Tibial artery (tissue), 4 donors: ENCODE measurements at regions of chr1 and their contacts with region 1.

Region 1: DNA sequence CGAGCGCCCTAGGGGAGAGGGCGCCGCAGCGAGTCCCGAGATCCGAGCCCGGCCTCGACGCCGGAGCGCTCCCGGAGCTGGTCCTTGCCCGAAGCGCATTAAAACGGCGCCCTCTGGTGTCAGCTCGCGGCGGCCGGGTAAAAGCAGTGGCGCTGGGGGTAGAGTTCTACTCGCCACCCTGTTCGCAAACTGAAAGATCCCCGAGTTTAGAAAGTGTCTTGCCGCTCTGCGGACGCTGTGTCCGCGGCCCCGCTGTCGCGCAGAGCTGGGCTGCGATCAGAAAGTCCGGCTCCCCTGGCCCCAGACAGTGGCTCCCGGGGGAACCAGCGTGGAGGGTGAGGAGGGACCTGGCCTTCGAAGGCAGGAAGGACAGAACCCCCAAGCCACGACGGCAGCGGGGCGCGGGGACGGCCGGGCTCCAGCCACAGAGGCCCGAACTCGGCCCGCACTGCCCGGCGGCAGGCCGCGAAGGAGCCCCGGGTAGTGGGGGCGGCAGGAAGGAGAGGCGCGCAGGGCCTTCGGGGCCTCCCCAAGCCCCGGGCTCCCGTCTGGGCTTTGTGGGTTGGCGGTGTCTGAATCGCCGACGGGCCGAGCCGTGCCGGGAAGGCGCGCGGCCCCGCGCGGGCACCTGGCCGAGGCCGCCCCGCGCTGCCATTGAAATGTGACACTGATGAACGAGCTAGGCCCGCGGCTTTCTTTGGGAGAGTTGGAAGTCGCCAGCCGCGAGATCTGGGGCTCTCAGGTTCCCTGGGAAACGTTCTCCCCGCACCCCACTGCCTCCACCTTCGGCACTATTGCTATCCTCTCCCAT is 39.1 kb upstream of the NFIA start:
- DNase-seq: peak; percentile 89 to 93
- H3K4me3 ChIP-seq: peak overlapping the region; percentile 55 to 59
- H3K27ac ChIP-seq: peak overlapping the region; percentile 79 to 81
- H3K4me1 ChIP-seq: peaks cover 0 to 11% (median 8%) of the 10 kb centered on the region in 4 donors
- H3K27me3 ChIP-seq: no peaks in the 10 kb centered on the region
- CTCF ChIP-seq: peak; percentile 90 to 94

Region 2: GRCh38 chr1:59971464-59971911 is 1071.7 kb before region 1 on chr1:
- intact Hi-C with region 1: loop called (anchors 5 kb)
- DNase-seq: peak; percentile 68 to 81
- H3K4me3 ChIP-seq: no peak overlapping the region
- H3K27ac ChIP-seq: no peak overlapping the region
- H3K4me1 ChIP-seq: peaks cover 0 to 7% (median 5%) of the 10 kb centered on the region in 4 donors
- H3K27me3 ChIP-seq: no peaks in the 10 kb centered on the region
- CTCF ChIP-seq: peak; percentile 91

Region 3: DNA sequence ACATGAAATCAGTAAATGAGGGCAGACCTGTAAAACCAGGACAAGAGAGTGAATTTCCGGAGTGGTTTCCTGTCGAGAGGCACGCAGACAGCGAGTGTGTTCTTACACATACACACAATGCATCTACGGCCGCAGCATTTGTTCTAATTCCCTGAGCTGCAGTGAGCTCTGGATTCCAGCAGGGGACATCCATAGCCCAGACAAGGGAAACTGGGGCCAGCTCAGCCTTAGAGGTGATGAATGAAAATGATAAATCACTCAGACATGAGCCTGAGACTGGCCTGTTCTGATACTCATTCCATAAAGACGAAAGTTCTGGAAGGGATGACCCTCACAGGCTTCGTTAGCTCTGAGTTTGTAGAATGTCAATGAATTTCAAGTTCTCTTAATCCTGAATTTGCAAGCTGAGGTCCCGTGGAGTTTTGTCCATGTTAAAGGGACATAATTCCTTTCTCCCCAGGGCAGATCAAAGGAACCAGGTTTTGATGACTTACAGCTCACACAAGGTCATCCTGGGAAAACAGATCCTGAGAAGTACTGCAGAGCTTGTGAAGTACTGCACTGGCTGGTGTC is 761.8 kb before region 1 on chr1:
- intact Hi-C with region 1: loop called (anchors 5 kb)
- DNase-seq: peak; percentile 64 to 74
- H3K4me3 ChIP-seq: no peak overlapping the region
- H3K27ac ChIP-seq: no peak overlapping the region
- H3K4me1 ChIP-seq: peaks cover 0 to 41% (median 14%) of the 10 kb centered on the region in 4 donors
- H3K27me3 ChIP-seq: no peaks in the 10 kb centered on the region
- CTCF ChIP-seq: peak; percentile 86 to 90

Region 4: DNA sequence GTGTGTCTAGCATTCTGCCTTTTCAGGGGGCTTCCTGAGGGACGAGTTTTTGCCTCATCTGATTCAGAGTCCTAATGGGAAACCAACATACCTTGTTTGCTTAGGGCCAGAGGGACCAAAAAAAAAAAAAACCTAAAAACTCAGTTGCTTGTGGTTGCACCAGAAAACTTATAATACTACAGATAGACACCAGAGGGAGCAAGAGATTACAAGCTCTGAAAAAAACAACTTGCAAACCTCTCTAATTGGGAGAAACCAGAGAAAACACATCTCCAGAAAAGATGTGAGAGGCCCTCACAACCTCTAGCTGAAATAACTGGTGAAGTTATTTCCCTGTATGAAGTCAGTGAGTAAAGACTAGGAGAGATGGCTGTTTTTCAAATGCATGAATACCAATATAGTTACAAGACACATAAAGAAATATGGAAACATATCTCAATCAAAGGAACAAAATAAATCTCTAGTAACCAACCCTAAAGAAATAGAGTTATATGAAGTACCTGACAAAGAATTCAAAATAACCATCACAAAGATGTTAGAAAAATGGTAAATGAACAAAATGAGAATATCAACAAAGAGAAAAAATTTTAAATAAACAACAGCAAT is 194.5 kb before region 1 on chr1:
- intact Hi-C with region 1: loop called (anchors 5 kb)
- DNase-seq: no peak
- H3K4me3 ChIP-seq: no peak overlapping the region
- H3K27ac ChIP-seq: no peak overlapping the region
- H3K4me1 ChIP-seq: no peaks in the 10 kb centered on the region
- H3K27me3 ChIP-seq: no peaks in the 10 kb centered on the region
- CTCF ChIP-seq: peak; percentile 48 to 57

Region 5: DNA sequence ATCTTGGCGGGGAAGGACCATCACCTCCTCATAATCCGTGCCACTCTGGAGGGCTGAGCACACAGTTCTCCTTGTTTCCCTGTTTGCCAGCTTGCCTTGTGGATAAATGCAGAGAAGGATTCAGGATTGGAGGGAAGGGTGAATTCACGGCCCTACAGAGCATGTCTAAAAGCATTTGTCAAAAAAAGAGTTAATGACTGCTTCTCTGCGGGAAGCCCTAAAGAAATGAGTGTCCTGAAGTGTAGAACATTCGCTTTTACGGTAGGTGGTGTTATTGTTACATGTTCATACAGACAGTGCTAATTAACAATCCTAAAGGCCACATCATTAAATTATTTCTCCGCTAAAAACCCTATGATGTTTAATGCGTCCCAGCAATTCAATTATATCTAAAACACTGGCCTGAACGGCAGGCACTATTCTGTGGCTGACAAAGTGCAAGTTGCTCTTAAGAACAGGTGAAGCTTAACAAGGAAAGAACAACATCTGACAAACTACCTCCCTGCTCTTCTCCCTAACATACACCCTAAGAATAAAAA is 73.2 kb before region 1 on chr1:
- intact Hi-C with region 1: loop called (anchors 5 kb)
- DNase-seq: no peak
- H3K4me3 ChIP-seq: no peak overlapping the region
- H3K27ac ChIP-seq: peak overlapping the region; percentile 44 to 52
- H3K4me1 ChIP-seq: peaks cover 0 to 39% (median 20%) of the 10 kb centered on the region in 4 donors
- H3K27me3 ChIP-seq: no peaks in the 10 kb centered on the region
- CTCF ChIP-seq: peak; percentile 41 to 51

Region 6: GRCh38 chr1:60989749-60990713 is 53.2 kb before region 1 on chr1:
- intact Hi-C with region 1: no loop called
- DNase-seq: peak in 1 of 2 donors; percentile 57
- H3K4me3 ChIP-seq: no peak overlapping the region
- H3K27ac ChIP-seq: peak overlapping the region; percentile 59 to 68
- H3K4me1 ChIP-seq: peaks cover 2 to 65% (median 41%) of the 10 kb centered on the region in 4 donors
- H3K27me3 ChIP-seq: no peaks in the 10 kb centered on the region
- CTCF ChIP-seq: no peak

Region 7: GRCh38 chr1:61077676-61078541 is 34.7 kb after region 1 on chr1:
- intact Hi-C with region 1: loop called (anchors 5 kb)
- DNase-seq: peak; percentile 94 to 97
- H3K4me3 ChIP-seq: peak overlapping the region; percentile 58 to 71
- H3K27ac ChIP-seq: peak overlapping the region; percentile 84 to 86
- H3K4me1 ChIP-seq: peaks cover 0 to 48% (median 30%) of the 10 kb centered on the region in 4 donors
- H3K27me3 ChIP-seq: no peaks in the 10 kb centered on the region
- CTCF ChIP-seq: no peak

Region 8: DNA sequence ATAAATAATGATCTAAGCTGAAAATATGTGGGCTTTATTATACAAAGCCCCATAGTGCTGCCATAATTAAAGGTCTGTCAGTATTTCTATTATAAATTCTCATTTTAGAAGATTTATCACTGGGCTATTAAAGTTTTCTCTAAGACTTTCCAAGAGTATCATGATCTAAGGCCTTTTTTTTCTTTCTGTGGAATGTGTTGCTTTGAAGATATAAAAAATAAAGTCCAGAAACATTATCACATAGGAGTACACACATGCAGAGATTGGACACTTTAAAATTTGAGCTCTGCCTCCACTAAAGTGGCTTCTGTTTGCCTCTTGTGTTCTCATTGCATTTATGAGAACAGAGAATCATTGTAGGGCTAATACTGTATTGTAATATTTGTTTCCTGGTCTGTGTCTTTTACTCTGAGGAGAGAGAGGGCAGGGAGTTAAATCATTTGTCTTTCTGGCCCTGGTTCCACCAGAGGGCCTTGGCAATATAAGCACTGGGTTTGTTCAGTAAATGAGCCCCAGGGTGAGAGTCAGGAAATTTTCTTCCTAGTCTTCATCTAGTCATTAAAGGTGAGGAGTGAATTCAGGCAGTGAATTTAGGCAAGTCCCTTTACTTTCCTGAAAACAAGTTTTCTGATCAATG is 109.4 kb after region 1 on chr1:
- intact Hi-C with region 1: no loop called
- DNase-seq: no peak
- H3K4me3 ChIP-seq: no peak overlapping the region
- H3K27ac ChIP-seq: peak overlapping the region; percentile 1 to 42
- H3K4me1 ChIP-seq: peaks cover 0 to 90% (median 41%) of the 10 kb centered on the region in 4 donors
- H3K27me3 ChIP-seq: no peaks in the 10 kb centered on the region
- CTCF ChIP-seq: no peak

Region 9: DNA sequence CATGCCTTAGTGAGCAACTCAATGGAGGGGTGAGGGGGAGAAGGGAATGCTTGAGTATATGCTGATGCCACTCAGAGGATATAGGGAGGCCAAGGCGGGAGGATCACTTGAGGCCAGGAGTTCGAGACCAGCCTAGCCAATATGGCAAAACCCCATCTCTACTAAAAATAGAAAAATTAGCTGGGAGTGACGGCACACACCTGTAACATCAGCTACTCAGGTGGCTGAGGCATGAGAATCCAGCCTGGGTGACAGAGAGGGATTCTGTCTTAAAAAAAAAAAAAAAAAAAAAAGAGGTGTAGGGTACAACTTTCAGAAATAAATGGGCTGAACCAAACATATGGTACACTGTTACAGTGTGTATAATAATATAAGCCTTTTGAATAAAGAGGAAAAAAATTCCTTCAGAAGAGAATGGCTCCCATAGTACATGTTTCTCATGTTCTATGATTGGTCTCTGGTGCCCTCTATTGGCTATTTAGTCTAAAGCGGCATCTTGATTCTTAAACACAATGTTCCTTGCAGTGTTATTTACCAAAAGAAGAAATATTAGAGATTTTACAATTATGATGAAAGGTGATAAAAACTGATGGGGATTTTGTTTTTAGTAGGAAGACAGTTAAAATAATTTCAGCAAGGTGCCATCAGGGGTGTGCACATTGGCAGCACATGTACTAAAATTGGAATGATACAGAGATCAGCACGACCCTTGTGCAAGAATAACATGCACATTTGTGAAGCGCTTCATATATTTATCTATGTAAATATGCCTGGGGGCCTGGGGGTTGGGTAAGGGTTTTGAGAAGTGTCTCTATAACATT is 808.8 kb after region 1 on chr1:
- intact Hi-C with region 1: loop called (anchors 5 kb)
- DNase-seq: no peak
- H3K4me3 ChIP-seq: no peak overlapping the region
- H3K27ac ChIP-seq: peak overlapping the region; percentile 23 to 38
- H3K4me1 ChIP-seq: peaks cover 0 to 50% (median 6%) of the 10 kb centered on the region in 4 donors
- H3K27me3 ChIP-seq: no peaks in the 10 kb centered on the region
- CTCF ChIP-seq: peak; percentile 75 to 78